H1 (cell line): ENCODE measurements at regions of chr2 and their contacts with region 1.

Region 1: GRCh38 chr2:161250864-161251436 is 57.3 kb upstream of the PSMD14 start:
- DNase-seq: no peak
- H3K4me3 ChIP-seq: no peak overlapping the region
- H3K27ac ChIP-seq: no peak overlapping the region
- H3K4me1 ChIP-seq: peaks cover 3 to 6% (median 4%) of the 10 kb centered on the region in 4 experiments; a peak in 4 of 7 replicates
- H3K27me3 ChIP-seq: peaks cover 0 to 2% (median 0%) of the 10 kb centered on the region in 4 experiments; a peak in 2 of 7 replicates
- CTCF ChIP-seq: peak in 2 of 3 experiments; percentile 57 to 75; a peak in 3 of 4 replicates
- EP300 ChIP-seq: no peak
- POLR2A ChIP-seq: no peak
- RAD21 ChIP-seq: peak; percentile 68 to 69

Region 2: DNA sequence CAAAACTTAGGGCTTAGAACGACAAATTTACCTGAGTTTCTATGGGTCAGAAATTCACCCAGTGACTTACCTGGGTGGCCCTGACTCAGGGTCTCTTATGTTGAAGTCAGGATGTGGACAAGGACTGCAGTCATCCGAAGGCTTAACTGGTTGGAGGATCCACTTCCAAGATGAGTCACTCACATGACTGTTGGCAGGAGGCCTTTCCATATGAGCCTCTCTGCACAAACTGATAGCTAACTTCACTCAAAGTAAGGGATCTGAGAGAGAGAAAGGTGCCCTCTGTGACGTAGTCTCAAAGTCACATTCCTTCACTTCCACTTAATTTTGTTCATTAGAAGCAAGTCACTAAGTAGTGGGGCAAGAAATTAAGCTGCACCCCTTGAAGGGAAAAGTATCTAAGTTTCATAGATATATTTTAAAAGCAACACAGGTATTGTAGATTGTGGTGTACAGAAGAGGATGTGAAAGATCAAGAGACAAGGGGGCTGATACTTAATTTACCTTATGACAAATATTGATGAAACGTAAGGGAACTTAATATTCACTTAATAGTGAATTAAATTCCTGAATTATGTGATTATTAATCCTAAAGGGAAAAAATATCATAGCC is 42.3 kb before region 1 on chr2:
- CTCF ChIA-PET with region 1: no interaction called
- POLR2A ChIA-PET with region 1: no interaction called
- DNase-seq: no peak
- H3K4me3 ChIP-seq: no peak overlapping the region
- H3K27ac ChIP-seq: no peak overlapping the region
- H3K4me1 ChIP-seq: no peaks in the 10 kb centered on the region
- H3K27me3 ChIP-seq: no peaks in the 10 kb centered on the region
- CTCF ChIP-seq: no peak
- EP300 ChIP-seq: no peak
- POLR2A ChIP-seq: no peak
- RAD21 ChIP-seq: no peak

Region 3: DNA sequence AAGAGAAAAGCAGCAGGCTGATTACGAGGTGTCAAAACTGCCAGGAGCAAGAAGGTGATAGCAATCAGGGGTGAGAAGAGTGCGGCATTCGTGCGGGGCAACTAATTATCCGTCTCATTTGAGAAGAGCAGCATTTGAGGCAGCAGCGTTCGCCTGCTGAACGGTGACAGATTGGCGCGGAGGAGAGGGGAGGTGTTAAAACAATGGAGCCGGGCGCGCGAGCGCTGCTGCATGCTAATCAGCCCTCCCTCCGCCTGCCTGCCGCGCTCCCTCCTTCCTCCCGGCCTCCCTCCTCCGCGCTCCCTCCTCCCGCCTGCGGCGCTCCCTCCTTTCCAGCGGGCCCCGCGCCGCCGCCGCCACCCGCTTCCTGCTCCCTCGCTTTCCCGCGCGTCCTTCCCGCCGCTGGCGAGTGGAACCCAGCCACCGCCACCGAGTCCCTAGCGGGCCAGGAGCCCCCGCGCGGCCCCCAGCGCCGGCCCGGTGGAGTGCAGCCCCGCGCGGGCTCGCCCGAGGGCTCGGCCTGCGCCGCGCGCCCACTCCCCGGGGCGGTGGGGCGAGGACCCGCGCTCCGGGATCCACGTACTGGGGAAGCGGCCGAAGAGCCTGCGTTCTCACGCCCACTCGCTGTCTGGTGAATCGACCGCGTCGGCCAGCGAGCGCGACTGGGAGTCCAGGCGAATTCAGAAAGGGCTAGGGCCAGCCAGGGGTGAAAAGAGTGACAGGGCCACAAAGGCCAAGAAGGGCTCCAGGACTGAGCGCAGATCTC is 12.2 kb before region 1 on chr2:
- CTCF ChIA-PET with region 1: interaction called, 30 read pairs
- POLR2A ChIA-PET with region 1: interaction called, 5 read pairs
- DNase-seq: peak; percentile 65 to 87
- H3K4me3 ChIP-seq: peak overlapping the region; percentile 52 to 79 (median 68)
- H3K27ac ChIP-seq: no peak overlapping the region
- H3K4me1 ChIP-seq: peaks cover 0 to 9% (median 3%) of the 10 kb centered on the region in 4 experiments; a peak in 6 of 7 replicates
- H3K27me3 ChIP-seq: peaks cover 1 to 48% (median 24%) of the 10 kb centered on the region in 4 experiments
- CTCF ChIP-seq: no peak
- EP300 ChIP-seq: peak in 1 of 2 experiments; percentile 15; a peak in 2 of 3 replicates
- POLR2A ChIP-seq: no peak
- RAD21 ChIP-seq: no peak

Region 4: DNA sequence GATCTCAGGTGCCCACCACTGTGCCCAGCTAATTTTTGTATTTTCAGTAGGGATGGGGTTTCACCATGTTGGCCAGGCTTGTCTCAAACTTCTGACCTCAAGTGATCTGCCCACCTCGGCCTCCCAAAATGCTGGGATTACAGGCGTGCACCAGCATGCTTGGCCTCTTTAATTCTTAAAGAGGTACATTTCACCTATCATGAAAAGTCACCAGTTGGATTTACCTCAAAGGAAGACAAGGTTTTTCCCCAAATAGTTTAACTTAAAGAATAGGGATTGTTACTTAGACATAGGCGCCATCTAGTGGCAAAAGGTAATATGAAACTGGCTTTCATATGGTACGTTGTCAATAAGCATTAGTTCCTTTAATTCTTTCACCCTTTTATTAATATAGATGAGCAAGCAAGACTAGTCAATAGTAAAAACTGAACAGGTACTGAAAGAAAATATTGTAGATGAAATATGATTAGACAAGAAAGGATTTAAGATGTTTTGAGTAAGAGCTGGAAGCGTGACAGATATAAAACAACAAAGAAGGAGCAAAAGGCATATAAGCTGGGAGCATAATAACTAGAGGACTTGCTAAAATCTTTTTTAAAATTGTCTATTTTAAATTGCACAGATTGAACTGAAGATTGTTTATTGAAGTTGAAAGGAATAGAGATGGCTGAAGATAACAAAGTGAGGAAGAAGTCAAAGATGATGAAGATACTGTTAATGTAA is 22.2 kb after region 1 on chr2:
- CTCF ChIA-PET with region 1: interaction called, 14 read pairs
- POLR2A ChIA-PET with region 1: no interaction called
- DNase-seq: no peak
- H3K4me3 ChIP-seq: no peak overlapping the region
- H3K27ac ChIP-seq: no peak overlapping the region
- H3K4me1 ChIP-seq: no peaks in the 10 kb centered on the region
- H3K27me3 ChIP-seq: no peaks in the 10 kb centered on the region
- CTCF ChIP-seq: peak in 2 of 3 experiments; percentile 45 to 63; a peak in 2 of 4 replicates
- EP300 ChIP-seq: no peak
- POLR2A ChIP-seq: no peak
- RAD21 ChIP-seq: peak; percentile 68 to 80